ENCODE measurements at regions of chr20 and their contacts with region 1.

Region 1: GRCh38 chr20:62793912-62794724 is 2.2 kb upstream of the MRGBP start:
- DNase-seq: peak; percentile 98
- H3K4me3 ChIP-seq: peak overlapping the region; percentile 59 to 82 (median 68)
- H3K27ac ChIP-seq: peak overlapping the region; percentile 90 to 94 (median 90)
- H3K4me1 ChIP-seq: peaks cover 0 to 52% (median 36%) of the 10 kb centered on the region in 4 donors
- H3K27me3 ChIP-seq: no peaks in the 10 kb centered on the region
- CTCF ChIP-seq: no peak
- EP300 ChIP-seq: peak in 1 of 4 donors; percentile 17
- POLR2A ChIP-seq: peak; percentile 83 to 90

Region 2: GRCh38 chr20:62407221-62407992 is 386.7 kb before region 1 on chr20 and contains the start of gene CABLES2:
- intact Hi-C with region 1: loop called (anchors 10 kb)
- DNase-seq: peak; percentile 97
- H3K4me3 ChIP-seq: peak within 1 kb of the TSS; percentile 55 to 82 (median 71)
- H3K27ac ChIP-seq: peak within 1 kb of the TSS; percentile 55 to 78 (median 66)
- H3K4me1 ChIP-seq: peaks cover 0 to 40% (median 39%) of the 10 kb centered on the region in 4 donors
- H3K27me3 ChIP-seq: no peaks in the 10 kb centered on the region
- CTCF ChIP-seq: peak in 2 of 4 experiments; percentile 38
- EP300 ChIP-seq: no peak
- POLR2A ChIP-seq: no peak
- total RNA-seq, gene CABLES2: 1.8 to 6.5 (median 4.2) TPM

Region 3: GRCh38 chr20:62652051-62652926 is 141.8 kb before region 1 on chr20:
- intact Hi-C with region 1: loop called (anchors 5 kb)
- DNase-seq: peak; percentile 98
- H3K4me3 ChIP-seq: peak overlapping the region; percentile 10 to 35 (median 32)
- H3K27ac ChIP-seq: peak overlapping the region; percentile 88 to 96 (median 92)
- H3K4me1 ChIP-seq: peaks cover 0 to 29% (median 21%) of the 10 kb centered on the region in 4 donors
- H3K27me3 ChIP-seq: no peaks in the 10 kb centered on the region
- CTCF ChIP-seq: peak in 1 of 4 experiments; percentile 35
- EP300 ChIP-seq: peak in 3 of 4 donors; percentile 74 to 98 (median 94)
- POLR2A ChIP-seq: peak; percentile 56 to 65

Region 4: DNA sequence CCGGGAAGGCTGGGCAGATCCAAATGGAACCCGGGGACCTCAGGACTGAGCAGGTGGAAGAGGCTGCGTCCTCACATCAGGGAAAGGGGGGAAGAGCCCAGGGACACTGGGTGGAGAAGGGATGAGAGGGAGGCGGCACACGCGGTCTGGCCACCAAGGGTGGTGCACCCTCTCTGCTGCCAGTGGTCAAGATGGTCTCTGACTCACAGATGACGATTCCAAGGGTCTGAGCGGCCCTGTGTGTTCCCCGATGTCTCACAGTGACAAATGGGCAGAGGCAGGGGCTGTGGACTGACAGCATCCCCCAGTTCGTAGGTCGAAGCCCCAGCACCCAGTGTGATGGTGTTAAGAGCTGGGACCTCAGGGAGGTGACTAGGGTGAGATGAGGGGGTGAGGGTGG is 119.7 kb before region 1 on chr20:
- intact Hi-C with region 1: no loop called
- DNase-seq: no peak
- H3K4me3 ChIP-seq: no peak overlapping the region
- H3K27ac ChIP-seq: no peak overlapping the region
- H3K4me1 ChIP-seq: no peaks in the 10 kb centered on the region
- H3K27me3 ChIP-seq: no peaks in the 10 kb centered on the region
- CTCF ChIP-seq: no peak
- EP300 ChIP-seq: no peak
- POLR2A ChIP-seq: no peak

Region 5: DNA sequence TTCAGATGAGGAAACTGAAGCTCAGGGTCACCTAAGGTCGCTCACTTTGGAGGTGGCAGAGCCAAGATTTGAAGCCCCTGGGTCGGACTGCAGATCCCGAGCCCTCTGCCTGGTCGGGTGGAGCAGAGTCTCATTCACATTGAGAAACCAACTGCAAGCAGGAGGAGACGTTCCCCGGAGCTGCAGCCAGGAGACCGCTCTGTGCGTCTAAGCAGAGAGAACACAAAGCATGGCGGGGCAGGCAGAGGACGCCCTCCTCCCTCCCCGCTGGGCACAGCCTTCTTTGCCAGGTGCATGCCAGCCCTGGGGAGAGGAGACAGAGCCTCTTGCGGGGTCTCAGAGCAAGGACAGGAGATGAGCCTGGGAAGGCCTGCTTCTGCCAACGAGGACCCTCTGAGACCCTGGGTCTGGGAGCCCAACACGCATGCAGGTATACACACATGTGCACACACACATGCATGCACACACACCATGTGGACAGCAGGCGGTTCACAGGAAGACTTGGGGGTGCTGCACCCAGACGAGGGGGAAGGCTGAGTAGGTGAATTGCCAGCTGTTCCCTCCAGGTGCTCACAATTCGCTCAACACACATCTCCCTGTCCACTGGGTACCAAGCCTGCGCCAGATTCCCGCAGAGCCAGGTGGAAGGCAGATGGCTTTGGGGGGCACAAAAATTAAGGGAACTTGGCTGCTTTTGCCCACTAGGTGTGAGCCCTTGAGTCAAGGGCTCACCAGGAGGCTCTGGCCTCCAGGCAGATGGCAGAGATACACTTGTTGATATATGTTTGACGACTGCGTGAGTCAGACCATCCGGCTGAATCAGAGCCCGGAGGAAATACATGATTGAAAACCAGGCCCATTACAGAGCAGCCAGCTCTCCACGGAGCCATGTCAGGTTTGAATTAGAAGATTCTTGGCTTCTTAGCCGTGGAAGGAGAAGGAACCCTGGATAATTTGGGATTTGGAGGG is 90.9 kb before region 1 on chr20:
- intact Hi-C with region 1: loop called (anchors 1 kb)
- DNase-seq: peak; percentile 83
- H3K4me3 ChIP-seq: no peak overlapping the region
- H3K27ac ChIP-seq: peak overlapping the region in 3 of 4 donors; percentile 59 to 82 (median 80)
- H3K4me1 ChIP-seq: peaks cover 4 to 39% (median 29%) of the 10 kb centered on the region in 4 donors
- H3K27me3 ChIP-seq: peaks cover under 1 to 7% (median 3%) of the 10 kb centered on the region in 3 donors
- CTCF ChIP-seq: peak; percentile 33 to 73 (median 48)
- EP300 ChIP-seq: no peak
- POLR2A ChIP-seq: no peak